ENCODE measurements at regions of chr1 and their contacts with region 1.

Region 1: DNA sequence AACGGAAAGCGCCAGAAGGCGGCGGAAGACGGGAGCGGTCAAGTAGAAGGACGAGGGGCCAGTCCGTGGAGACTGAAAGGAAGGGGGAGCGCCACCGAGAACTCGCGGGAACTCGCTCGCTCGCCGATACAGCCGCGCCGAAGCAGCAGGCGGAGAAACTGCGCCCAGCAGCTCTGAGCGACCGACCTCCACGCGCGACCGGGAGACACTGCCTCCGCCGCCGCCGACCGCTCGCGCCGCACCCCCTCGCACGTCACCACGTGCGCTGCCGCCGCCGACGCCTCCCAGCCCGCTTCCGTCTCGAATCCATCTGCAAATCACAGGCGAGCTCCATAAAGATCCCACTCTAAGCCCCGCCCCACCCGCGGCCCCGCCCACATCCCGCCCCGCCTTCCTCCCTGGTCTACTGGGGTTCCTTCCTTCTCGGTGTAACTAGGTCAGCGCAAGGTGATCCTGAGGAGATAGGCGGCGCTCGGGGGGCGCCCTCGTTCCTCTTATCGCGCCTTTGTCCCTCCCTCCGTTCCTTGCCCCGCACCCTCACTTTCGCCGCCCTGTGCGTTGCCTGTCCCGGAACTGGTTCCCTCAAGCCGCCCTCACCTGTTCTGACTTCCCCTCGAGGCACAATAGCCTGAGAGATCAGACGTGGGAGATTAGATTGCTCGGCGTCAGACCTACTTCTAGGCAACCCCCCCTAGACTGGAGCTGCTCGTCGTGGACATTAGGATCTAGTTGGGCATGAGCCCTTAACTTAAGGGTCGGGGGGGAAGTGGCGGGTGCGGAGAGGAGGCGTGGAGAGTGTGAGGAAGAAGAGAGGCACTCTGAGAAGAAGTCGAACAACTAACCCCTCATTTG is at the start of gene IVNS1ABP:
- DNase-seq: peak; percentile 94
- ATAC-seq: peak; percentile 82
- H3K4me3 Mint-ChIP-seq: peak within 1 kb of the TSS; percentile 96
- H3K27ac Mint-ChIP-seq: peak within 1 kb of the TSS; percentile 96
- H3K4me1 Mint-ChIP-seq: peaks cover 43% of the 10 kb centered on the region
- H3K27me3 Mint-ChIP-seq: no peaks in the 10 kb centered on the region
- total RNA-seq, gene IVNS1ABP: 261 to 265 TPM

Region 2: GRCh38 chr1:185305419-185305818 is 11.8 kb before region 1 on chr1:
- POLR2A ChIA-PET with region 1: interaction called, 25 read pairs
- DNase-seq: no peak
- ATAC-seq: peak; percentile 24
- H3K4me3 Mint-ChIP-seq: no peak overlapping the region
- H3K27ac Mint-ChIP-seq: peak overlapping the region; percentile 28
- H3K4me1 Mint-ChIP-seq: peaks cover 26% of the 10 kb centered on the region
- H3K27me3 Mint-ChIP-seq: no peaks in the 10 kb centered on the region

Region 3: GRCh38 chr1:185420588-185421081 is 103.4 kb after region 1 on chr1:
- POLR2A ChIA-PET with region 1: interaction called, 105 read pairs
- DNase-seq: peak; percentile 42
- ATAC-seq: peak; percentile 88
- H3K4me3 Mint-ChIP-seq: peak overlapping the region; percentile 75
- H3K27ac Mint-ChIP-seq: peak overlapping the region; percentile 91
- H3K4me1 Mint-ChIP-seq: peaks cover 61% of the 10 kb centered on the region
- H3K27me3 Mint-ChIP-seq: no peaks in the 10 kb centered on the region

Region 4: DNA sequence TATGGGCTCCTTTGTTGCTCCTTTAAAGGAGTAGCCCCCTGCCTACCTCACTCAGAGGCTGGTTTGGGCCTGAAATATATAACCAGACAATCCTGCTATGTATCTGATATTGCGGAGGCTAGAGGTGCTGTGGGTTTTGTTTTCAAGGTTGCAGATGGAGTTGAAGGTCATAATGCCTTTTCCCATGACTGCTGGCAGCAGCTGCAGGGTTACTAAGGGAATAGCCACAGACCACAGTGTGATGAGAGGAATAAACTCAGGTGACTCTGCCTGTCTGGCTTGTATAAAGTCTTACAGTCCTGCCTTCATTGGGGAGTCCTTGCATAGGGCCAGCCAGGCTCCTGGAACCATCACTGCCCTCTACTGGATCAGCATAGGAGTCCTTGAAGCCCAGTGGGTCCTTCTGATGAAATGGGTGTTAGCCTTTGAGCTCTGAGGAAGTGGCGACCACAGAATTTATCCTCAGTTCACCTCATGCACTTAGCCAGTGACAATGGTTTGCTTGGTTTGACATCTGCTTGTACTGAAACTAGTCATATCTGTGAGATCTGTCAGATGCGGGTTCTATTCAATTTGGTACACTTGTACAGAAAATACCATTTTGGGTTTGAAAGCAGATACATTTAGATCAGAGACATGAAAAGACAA is 242.5 kb after region 1 on chr1:
- POLR2A ChIA-PET with region 1: interaction called, 97 read pairs
- DNase-seq: peak; percentile 67
- ATAC-seq: peak; percentile 92
- H3K4me3 Mint-ChIP-seq: peak overlapping the region; percentile 72
- H3K27ac Mint-ChIP-seq: peak overlapping the region; percentile 88
- H3K4me1 Mint-ChIP-seq: peaks cover 42% of the 10 kb centered on the region
- H3K27me3 Mint-ChIP-seq: no peaks in the 10 kb centered on the region

Region 5: DNA sequence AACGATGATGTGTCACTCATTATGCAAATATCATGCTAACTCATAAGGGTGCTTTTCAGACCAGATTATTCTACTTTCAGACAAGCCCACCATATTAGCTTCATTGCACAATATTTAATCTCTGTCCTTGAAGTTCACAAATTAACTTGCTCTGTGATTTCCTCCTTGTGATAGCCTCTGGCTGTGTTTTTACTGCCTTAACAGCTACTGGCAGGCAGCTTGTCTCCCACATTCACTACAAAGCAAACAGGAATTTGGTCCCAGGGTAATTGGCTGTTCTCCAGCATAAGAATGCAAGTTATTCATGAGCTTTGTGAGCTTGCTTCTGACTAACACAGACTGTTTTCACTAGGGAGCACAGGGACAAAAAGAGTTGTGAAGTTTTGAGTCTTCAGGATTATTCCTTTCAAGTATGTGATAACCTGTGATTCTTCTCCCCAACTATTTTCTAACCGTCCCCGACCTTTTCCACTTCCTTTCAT is 329.0 kb after region 1 on chr1:
- POLR2A ChIA-PET with region 1: interaction called, 19 read pairs
- DNase-seq: no peak
- ATAC-seq: no peak
- H3K4me3 Mint-ChIP-seq: peak overlapping the region; percentile 48
- H3K27ac Mint-ChIP-seq: peak overlapping the region; percentile 20
- H3K4me1 Mint-ChIP-seq: peaks cover 35% of the 10 kb centered on the region
- H3K27me3 Mint-ChIP-seq: no peaks in the 10 kb centered on the region